OCI-LY7 (cell line): ENCODE measurements at regions of chr1 and their contacts with region 1.

Region 1: DNA sequence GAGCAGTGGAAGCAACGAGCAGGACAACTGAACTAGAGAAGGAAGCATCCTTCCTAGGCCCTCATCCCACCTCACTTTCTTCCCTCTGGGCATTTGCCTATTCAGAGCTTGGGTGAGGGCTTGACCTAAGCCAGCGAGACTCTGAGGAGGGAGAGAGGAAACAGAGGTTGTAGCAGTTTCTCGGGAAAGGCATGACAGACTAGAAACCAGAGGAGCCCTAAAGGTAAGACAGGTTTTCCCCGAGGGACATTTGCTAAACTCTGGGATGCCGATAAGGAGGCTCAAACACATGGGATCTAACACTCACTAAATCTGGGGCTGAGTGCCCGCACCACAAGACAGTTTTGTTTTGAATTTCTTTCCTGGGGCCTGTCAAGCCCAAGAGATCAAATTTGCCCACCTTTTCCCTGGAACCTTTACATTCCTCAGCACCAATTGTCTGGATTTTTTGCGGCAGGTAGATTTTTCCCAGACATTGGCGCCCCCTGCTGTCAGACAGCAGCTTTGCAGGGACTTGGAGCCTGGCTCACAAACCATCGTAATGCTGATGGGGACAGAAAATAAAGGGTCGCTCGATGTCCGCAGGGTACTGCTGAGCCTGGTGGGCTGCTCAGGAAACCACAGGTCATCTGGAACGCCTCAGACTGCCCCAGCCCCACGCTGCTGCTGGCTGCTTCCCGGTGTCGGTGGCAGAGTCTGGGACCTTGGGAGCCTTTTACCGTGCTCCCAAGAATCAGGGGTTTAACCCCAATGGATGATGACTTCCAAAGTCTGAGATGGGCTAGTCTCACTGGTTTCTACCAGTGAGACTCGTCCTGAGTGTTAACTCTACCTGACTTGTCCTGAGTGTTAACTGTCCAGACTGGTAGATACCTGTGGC is 23.4 kb upstream of the TSPAN2 start:
- DNase-seq: peak; percentile 40
- H3K4me3 ChIP-seq: no peak overlapping the region
- H3K27ac ChIP-seq: no peak overlapping the region
- H3K4me1 ChIP-seq: no peaks in the 10 kb centered on the region
- CTCF ChIP-seq: peak; percentile 98

Region 2: DNA sequence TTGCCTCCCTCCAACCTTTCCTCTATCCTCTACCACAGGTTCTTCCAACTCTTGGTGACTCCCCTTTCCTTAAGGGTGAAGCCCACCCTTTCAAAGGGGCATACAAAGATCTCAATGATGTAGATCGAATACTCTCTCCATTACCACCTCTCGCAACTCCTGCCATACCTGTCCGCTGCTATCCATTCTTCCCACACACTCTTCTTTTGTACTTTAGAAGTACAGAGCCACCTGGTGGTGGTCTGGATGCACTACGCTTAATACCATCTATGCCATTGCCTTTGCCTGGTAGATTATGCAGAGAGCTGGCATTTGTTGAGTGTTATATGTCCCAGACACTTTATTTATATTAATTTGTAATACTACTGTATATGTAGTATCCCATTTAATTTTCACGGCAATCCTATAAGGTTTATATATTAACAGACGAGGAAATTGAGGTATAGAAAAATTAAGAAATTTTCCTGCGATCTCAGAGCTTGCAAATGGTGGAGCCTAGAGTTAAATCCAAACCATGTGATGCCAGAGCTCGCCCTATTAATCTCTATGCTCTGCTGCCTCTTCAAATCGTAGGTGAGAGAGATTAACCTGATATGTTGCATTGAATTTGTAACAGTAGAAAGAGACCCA is 60.2 kb before region 1 on chr1:
- CTCF ChIA-PET with region 1: no interaction called
- POLR2A ChIA-PET with region 1: interaction called, 3 read pairs
- intact Hi-C with region 1: loop called (anchors 2 kb)
- DNase-seq: peak; percentile 65
- H3K4me3 ChIP-seq: no peak overlapping the region
- H3K27ac ChIP-seq: no peak overlapping the region
- H3K4me1 ChIP-seq: no peaks in the 10 kb centered on the region
- CTCF ChIP-seq: peak; percentile 94